BJ (cell line): ENCODE measurements at regions of chr1 and their contacts with region 1.

Region 1: DNA sequence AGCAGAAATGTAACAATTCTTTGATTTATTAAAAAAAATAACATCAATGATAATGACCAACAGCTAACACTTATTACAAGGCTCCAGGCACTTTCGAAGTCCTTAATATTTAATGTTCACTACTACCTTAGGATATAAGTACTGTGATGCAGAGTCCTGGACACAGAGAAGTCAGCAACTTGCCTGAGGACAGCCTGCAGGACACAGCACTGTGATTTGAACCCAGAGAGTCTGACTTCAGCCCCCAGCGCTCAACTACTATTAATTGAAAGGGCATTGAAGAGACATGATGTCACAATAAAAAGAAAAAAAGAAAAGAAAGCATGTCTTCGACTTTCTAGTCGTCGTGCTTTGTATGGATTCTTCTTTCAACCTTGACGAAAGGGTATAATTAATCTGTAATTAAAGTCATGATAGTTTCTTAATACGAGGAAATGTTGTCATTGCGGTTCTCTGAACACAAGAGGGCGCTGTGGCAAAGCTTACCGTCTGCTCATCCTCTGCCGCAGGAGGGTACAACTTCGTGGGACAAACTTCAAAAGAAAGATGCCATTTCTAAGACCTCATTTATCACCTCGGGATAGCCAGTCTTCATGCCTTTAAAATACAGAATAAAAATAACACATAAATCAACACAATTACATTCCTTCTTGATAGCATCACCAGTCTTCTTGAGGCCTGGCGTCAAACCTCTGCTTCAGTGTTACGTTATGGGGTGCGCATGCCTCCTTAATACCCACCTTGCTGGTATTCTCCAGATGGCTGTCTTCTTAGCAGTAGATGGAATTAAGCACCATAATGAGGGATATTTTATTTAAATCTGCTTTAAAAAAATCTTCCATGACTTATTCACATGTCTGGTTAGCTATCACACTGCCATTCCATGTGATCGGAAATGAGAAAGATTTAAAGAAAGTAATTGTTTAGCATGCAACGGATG is 240.1 kb downstream of the DISC1 start:
- DNase-seq: no peak
- H3K4me3 ChIP-seq: no peak overlapping the region
- H3K27me3 ChIP-seq: no peaks in the 10 kb centered on the region
- CTCF ChIP-seq: peak; percentile 80

Region 2: GRCh38 chr1:231603598-231604275 is 262.9 kb before region 1 on chr1:
- CTCF ChIA-PET with region 1: no interaction called
- POLR2A ChIA-PET with region 1: no interaction called
- DNase-seq: no peak
- H3K4me3 ChIP-seq: peak overlapping the region; percentile 33
- H3K27me3 ChIP-seq: no peaks in the 10 kb centered on the region
- CTCF ChIP-seq: peak; percentile 70

Region 3: DNA sequence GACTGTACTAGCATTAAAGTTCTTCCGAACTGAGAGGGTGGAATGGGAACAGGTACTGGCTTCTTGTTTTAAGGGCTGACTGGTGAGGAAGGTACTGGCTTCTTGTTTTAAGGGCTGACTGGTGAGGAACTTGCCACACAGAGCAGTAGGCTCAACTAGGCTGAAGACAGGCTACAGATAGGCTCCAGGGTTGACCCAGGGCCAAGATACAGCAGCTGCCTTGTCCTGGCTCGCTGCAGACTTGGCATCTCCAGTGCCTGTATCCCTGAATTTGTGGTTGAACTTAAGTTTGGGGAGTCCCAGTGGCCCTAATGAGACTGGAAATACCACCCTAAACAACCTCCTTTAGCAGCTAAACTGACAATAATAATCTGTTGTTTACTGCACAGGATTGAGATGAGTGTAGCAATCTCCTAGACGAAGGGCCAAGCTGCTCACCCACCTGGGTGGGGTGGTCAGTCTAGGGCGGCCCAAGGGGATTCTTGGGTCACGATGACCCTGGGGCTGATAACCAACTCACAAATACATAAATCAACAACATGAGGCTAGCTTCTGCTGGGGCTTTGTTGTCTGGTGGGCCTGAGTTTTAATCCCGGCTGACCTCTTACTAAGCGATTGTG is 13.0 kb before region 1 on chr1:
- CTCF ChIA-PET with region 1: interaction called, 30 read pairs
- POLR2A ChIA-PET with region 1: no interaction called
- DNase-seq: no peak
- H3K4me3 ChIP-seq: no peak overlapping the region
- H3K27me3 ChIP-seq: no peaks in the 10 kb centered on the region
- CTCF ChIP-seq: no peak

Region 4: DNA sequence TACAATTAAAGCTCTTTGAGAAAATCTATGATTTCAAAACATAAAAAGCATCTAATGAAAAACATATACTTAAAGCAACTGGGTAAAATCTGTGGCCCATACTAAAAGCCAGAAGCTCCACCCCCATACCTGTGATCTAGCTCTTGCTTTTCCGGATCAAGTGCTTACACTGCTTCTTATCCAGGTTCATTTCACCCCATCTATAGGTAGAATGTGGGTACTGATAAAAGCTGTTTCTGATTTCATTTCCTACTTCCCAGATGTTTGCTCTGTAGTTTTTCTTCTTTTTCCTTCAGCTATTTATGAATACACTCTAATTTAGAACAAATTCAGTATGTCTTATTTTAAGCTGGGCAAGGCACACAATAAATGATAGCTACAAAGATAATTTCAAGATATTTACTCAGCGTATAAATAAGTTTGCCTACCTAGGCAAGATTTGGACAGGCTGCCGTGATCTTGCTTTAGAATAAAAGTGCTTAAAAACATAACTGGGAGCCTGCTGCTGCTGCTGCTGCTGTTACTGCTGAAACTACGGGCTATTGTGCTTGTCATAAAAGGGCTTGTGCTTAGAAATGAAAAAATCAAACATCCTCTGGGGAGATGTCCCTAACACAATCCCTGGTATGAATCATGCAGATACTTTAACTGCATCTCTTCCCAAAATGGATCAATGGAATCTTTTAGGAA is 761.1 kb after region 1 on chr1:
- CTCF ChIA-PET with region 1: interaction called, 15 read pairs
- POLR2A ChIA-PET with region 1: no interaction called
- DNase-seq: no peak
- H3K4me3 ChIP-seq: no peak overlapping the region
- H3K27me3 ChIP-seq: no peaks in the 10 kb centered on the region
- CTCF ChIP-seq: peak; percentile 34